ENCODE measurements at regions of chr1 and their contacts with region 1.

Region 1: DNA sequence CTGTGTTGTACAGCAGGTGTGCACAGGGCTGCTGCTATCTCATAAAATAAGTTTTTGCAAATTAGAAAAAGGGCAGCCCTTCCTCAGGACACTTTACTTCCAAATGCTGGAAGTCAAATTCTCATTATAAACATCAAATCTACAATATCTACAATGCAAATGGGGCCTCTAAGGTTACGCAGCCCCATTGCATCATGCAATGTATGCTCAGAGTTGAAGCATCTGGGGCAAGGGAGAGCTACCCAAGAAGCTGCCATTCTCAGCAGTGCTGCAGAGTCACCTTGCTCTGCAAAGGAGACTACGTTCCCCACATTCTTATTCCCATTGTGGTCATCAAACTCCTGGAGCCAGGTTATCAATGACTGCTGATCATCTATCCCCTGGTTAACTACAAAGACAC is 208.9 kb upstream of the POGK start:
- DNase-seq: no peak
- H3K4me3 ChIP-seq: no peak overlapping the region
- CTCF ChIP-seq: no peak
- POLR2A ChIP-seq: no peak

Region 2: GRCh38 chr1:166588741-166589140 is 41.6 kb before region 1 on chr1:
- intact Hi-C with region 1: no loop called
- DNase-seq: no peak
- H3K4me3 ChIP-seq: no peak overlapping the region
- CTCF ChIP-seq: no peak
- POLR2A ChIP-seq: no peak

Region 3: DNA sequence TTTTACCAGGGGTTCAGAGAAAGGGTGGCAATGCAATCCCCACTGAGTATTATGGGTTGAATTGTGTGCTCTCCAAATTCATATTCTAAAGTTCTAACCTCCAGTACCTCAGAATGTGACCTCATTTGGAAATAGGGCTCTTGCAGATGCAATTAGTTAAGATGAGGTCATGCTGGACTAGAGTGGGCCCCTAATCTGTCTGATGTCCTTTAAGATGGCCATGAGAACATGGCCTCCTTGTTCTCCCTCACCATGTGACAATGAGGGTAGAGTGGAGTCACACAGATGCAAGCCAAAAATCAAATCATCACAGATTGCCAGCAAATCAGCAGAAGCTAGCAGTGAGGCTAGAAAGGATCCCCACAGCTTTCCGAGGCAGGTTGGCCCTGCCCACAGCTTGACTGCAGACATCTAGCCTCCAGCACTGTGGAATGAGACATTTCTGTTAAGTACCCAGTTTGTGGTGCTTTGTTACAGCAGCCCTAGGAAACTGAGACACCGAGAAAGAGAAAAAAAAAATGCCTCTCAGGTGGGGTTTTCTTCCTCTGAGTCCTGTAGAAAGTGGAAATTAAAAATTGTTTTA is 948.7 kb after region 1 on chr1:
- intact Hi-C with region 1: loop called (anchors 5 kb)
- DNase-seq: no peak
- H3K4me3 ChIP-seq: no peak overlapping the region
- CTCF ChIP-seq: no peak
- POLR2A ChIP-seq: no peak

Measured in lower leg skin (tissue), 4 donors.